ENCODE measurements at regions of chr16 and their contacts with region 1.

Region 1: DNA sequence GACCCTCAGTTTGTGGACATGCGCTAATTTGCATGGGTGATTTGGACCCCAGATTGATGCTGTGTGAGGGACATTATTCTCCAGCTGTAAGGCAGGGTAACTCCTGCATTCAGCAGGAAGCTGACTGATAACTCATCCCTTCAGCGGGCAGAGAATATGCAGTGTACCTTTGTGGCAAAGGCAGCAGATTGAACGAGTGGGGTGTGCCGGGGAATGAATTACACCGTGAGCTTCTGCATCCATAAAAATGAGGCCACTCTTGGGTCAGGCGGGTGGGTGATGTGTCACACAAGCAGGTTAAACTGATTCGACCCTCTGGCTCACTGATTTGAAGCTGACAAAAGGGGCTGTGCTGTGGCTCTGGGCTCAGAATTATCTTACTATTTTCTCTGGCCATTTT is 128.9 kb upstream of the PMFBP1 start:
- DNase-seq: no peak

Region 2: DNA sequence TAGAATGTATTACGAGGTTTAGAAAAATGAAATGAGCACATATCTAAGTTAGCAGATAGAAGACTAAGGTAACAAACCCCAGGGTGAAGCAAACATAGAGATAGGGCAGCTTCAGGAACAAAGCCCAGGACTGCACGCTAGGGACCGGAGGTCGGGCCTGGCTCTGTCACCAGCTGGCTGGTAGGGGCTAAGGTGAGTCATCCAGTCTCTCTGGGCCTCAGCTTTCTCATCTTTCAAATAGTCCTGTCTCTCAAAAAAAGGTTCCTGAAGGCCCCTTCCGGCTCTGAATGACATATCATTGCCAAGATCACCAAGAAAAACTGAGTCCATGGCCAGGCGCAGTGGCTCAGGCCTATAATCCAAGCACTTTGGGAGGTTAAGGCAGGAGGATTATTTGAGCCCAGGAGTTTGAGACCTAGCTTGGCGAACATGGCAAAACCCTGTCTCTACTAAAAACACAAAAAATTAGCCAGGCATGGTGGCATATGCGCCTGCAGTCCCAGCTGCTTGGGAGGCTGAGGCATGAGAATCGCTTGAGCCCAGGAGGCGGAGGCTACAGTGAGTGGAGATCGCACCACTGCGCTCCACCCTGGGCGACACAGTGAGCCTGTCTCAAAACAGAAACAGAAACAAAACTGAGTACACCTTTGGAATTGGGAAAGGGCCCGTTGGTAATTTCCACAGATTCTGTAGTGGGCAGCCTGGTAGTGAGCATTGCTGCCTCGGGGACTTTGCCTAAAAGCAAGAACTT is 326.6 kb before region 1 on chr16:
- intact Hi-C with region 1: no loop called
- DNase-seq: no peak

Region 3: GRCh38 chr16:72198021-72198711 is 102.7 kb before region 1 on chr16:
- intact Hi-C with region 1: no loop called
- DNase-seq: peak; percentile 41 to 94 (median 69)

Region 4: DNA sequence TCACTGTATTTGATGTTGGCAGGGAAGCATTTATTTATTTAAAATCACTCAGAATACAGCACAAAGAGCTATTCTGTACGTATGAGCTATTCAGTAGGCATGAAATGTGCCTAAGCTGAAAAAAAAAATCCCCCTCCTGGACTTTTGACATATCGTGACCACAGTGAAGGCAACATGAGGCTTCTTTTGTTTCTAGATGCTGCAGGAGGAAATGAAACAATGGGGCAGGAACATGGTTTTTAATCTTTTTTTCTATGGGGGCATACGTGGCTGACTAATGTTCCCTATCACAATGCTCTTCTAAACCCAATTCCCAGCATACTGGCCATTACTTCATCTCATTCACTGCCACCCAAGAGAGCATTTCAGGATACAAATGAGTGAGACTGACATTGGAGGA is 62.1 kb after region 1 on chr16:
- intact Hi-C with region 1: loop called (anchors 10 kb)
- DNase-seq: no peak

Measured in posterior cingulate gyrus (tissue), 11 donors.